ENCODE measurements at regions of chr5 and their contacts with region 1.

Region 1: GRCh38 chr5:112995764-112996618 is 19.4 kb downstream of the DCP2 start:
- DNase-seq: peak; percentile 59
- H3K4me3 Mint-ChIP-seq: no peak overlapping the region
- H3K27ac Mint-ChIP-seq: no peak overlapping the region
- H3K4me1 Mint-ChIP-seq: peaks cover 23% of the 10 kb centered on the region
- H3K27me3 Mint-ChIP-seq: no peaks in the 10 kb centered on the region

Region 2: DNA sequence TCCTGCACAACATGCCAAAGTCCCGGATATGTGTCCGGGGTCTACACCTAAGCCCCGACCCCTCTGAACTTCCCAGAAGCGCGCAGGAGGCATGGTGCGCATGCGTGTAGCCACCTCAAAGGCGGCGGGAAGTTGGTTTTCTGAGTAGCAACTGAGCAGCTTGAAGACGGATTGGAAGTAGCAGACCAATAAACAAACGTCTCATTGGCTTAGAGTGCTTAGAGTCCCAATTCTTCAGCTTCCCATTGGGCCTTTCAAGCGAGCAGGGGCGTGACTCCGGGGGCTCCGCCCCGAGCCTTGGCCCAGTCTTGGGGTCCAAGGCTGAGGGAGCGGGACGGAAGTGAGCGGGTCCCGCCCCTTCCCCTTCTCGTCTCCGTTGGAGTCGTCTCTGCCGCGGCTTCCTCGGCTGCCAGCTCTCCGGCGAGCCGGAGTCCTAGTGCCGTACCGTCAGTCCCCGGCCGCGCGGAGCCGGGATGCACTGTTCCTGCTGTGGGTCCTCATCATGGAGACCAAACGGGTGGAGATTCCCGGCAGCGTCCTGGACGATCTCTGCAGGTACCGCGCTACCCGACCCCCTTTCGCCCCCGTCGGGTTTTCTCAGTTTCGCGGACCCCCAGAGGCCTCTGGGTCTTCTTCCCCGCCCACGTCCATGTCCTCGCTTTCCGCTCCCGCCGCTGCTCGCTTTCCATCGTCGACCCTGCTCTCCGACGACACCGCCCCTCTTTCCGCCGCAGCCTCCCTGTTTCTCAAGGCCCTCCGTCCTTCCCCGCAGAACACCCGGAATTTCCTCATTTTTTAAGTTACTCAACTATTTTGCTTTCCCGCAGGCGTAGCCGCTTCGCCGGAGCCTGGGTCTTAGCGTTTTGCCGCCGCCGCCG is 19.3 kb before region 1 on chr5 and contains the start of gene DCP2:
- intact Hi-C with region 1: loop called (anchors 2 kb)
- DNase-seq: peak; percentile 96
- H3K4me3 Mint-ChIP-seq: peak within 1 kb of the TSS; percentile 99
- H3K27ac Mint-ChIP-seq: peak within 1 kb of the TSS; percentile 95
- H3K4me1 Mint-ChIP-seq: peaks cover 39% of the 10 kb centered on the region
- H3K27me3 Mint-ChIP-seq: no peaks in the 10 kb centered on the region
- total RNA-seq, gene DCP2: 81.6 and 84.1 TPM in 2 replicates

Region 3: DNA sequence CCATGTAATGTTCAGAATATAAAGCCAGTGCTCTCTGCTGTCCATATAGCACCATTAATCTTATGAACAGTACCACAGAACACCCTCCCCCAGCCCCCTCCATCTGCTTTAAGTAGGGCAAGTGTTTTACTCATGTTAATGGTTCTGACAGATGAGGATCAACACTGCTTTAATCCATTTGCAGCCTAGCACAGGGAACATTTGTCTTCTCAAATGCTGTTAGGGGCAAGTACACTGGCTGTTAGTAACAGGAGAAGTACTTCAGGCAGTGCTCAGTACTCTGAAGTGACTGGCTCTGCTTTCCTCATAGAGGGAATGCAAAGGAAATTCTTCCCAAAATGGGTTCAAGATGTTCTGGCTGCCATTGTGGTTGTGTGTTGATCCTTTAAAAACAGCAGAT is 183.2 kb after region 1 on chr5:
- intact Hi-C with region 1: loop called (anchors 10 kb)
- DNase-seq: no peak
- H3K4me3 Mint-ChIP-seq: no peak overlapping the region
- H3K27ac Mint-ChIP-seq: no peak overlapping the region
- H3K4me1 Mint-ChIP-seq: no peaks in the 10 kb centered on the region
- H3K27me3 Mint-ChIP-seq: peaks cover 17% of the 10 kb centered on the region

Region 4: GRCh38 chr5:113232667-113233066 is 236.7 kb after region 1 on chr5:
- intact Hi-C with region 1: loop called (anchors 5 kb)
- DNase-seq: no peak
- H3K4me3 Mint-ChIP-seq: no peak overlapping the region
- H3K27ac Mint-ChIP-seq: no peak overlapping the region
- H3K4me1 Mint-ChIP-seq: peaks cover 2% of the 10 kb centered on the region
- H3K27me3 Mint-ChIP-seq: peaks cover 50% of the 10 kb centered on the region

Region 5: DNA sequence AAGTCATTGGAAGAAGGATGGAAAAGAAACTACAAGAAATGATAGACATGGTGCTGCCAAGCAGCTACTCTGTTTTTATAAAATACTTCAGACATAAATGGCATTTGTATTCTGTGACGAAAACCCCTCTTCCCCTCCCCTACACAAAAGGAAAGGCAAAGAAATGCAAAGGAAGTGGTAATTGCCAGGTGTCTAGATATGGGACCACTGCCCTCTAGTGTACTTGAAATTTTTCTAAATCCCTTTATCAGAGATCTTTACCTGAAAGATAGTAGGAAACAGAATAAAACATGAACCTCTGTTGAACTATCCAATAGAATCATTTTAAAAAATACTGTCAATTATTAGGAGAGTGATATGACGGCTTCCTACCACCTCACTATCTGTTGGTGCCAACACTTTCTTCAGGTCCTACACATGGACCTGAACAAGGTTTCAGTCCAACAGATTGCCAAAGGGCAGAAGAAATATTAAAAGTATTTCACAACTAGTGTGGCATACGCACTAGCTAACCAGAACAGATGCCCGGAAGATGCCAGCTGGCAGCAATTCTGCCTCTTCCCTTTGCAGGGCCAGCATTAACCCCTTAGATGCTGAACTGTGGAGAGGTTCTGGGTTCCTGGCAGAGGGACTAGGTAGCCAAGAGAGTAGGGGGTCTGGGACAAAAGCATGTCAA is 334.7 kb after region 1 on chr5:
- intact Hi-C with region 1: loop called (anchors 1 kb)
- DNase-seq: no peak
- H3K4me3 Mint-ChIP-seq: no peak overlapping the region
- H3K27ac Mint-ChIP-seq: no peak overlapping the region
- H3K4me1 Mint-ChIP-seq: peaks cover 21% of the 10 kb centered on the region
- H3K27me3 Mint-ChIP-seq: peaks cover 11% of the 10 kb centered on the region

Region 6: GRCh38 chr5:113378959-113379541 is 383.1 kb after region 1 on chr5:
- intact Hi-C with region 1: loop called (anchors 1 kb)
- DNase-seq: peak; percentile 46
- H3K4me3 Mint-ChIP-seq: peak overlapping the region; percentile 3
- H3K27ac Mint-ChIP-seq: no peak overlapping the region
- H3K4me1 Mint-ChIP-seq: peaks cover 37% of the 10 kb centered on the region
- H3K27me3 Mint-ChIP-seq: peaks cover 25% of the 10 kb centered on the region

Region 7: GRCh38 chr5:113606298-113607134 is 610.5 kb after region 1 on chr5:
- intact Hi-C with region 1: loop called (anchors 1 kb)
- DNase-seq: peak; percentile 24
- H3K4me3 Mint-ChIP-seq: no peak overlapping the region
- H3K27ac Mint-ChIP-seq: no peak overlapping the region
- H3K4me1 Mint-ChIP-seq: peaks cover 19% of the 10 kb centered on the region
- H3K27me3 Mint-ChIP-seq: peaks cover 31% of the 10 kb centered on the region

Measured in activated T-helper 2 cell treated with anti-CD3 and anti-CD28 coated beads, Interferon-gamma antibody, Interleukin-2, Interleukin-4, amounts not matched to agents 10 μg/mL and 5 μg/mL and 100 μg/mL, durations not matched to agents 14 hours and 24 hours and 36 hours (primary cell).